ENCODE measurements at regions of chr13 and their contacts with region 1.

Region 1: GRCh38 chr13:29508130-29508875 is 87.2 kb downstream of the SLC7A1 start:
- DNase-seq: peak; percentile 86
- ATAC-seq: peak; percentile 80
- H3K4me3 Mint-ChIP-seq: no peak overlapping the region
- H3K27ac Mint-ChIP-seq: no peak overlapping the region
- H3K4me1 Mint-ChIP-seq: no peaks in the 10 kb centered on the region
- H3K27me3 Mint-ChIP-seq: peaks cover 3% of the 10 kb centered on the region

Region 2: DNA sequence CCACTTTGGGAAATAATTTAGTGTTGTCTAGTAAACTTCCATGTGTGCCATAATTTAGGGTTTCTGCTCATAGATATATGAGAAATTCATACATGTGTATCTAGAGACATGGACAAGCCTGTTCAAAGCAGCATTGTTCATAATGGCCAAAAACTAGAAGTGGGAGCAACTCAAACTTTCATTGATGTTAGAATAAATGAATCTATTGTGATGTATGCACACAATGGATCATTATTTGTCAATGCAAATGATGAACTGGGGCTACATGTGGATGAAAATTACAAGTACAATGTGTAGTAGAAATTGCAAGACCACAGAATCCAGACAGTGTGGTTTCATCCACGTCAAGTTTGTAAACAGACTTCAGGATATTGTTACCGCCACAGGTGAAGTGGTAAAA is 197.5 kb before region 1 on chr13:
- CTCF ChIA-PET with region 1: no interaction called
- POLR2A ChIA-PET with region 1: no interaction called
- intact Hi-C with region 1: no loop called
- DNase-seq: no peak
- ATAC-seq: no peak
- H3K4me3 Mint-ChIP-seq: no peak overlapping the region
- H3K27ac Mint-ChIP-seq: no peak overlapping the region
- H3K4me1 Mint-ChIP-seq: no peaks in the 10 kb centered on the region
- H3K27me3 Mint-ChIP-seq: peaks cover 5% of the 10 kb centered on the region

Region 3: GRCh38 chr13:29496240-29496712 is 12.0 kb before region 1 on chr13:
- CTCF ChIA-PET with region 1: interaction called, 13 read pairs
- POLR2A ChIA-PET with region 1: no interaction called
- intact Hi-C with region 1: no loop called
- DNase-seq: no peak
- ATAC-seq: no peak
- H3K4me3 Mint-ChIP-seq: no peak overlapping the region
- H3K27ac Mint-ChIP-seq: no peak overlapping the region
- H3K4me1 Mint-ChIP-seq: peaks cover 3% of the 10 kb centered on the region
- H3K27me3 Mint-ChIP-seq: peaks cover 19% of the 10 kb centered on the region

Region 4: DNA sequence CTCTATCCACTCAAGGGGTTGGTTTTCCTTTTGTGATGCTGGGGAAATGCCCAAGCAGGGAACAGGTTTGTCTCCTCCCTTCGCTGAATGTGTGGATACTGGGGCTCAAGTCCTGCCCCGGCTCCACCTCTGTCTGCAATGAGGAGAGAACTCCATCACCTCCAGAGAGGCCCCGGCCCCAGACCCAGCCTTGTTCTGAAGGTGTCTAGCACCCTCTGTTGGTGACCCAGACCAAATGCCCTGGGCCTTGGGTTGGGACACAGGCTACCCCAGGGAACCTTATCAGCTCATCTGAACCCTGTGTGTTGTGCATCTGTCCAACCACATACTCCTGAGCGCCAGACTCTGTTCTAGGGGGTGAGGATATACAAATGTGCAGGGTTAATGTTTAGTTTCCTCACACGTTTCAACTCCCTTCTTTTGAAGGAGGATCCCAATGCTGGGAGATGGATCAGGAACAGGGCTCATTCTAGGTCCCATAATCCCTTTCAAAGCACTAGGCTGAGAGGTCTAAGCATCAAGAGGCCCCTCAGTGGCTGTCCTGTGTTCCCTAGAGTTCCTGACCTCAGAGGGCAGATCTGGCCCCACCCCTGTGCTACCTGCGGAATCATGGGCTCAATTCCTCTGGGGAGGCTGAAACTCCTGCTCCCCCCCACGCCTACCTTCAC is 199.7 kb after region 1 on chr13:
- CTCF ChIA-PET with region 1: interaction called, 31 read pairs
- POLR2A ChIA-PET with region 1: no interaction called
- intact Hi-C with region 1: loop called (anchors 1 kb)
- DNase-seq: peak; percentile 73
- ATAC-seq: peak; percentile 94
- H3K4me3 Mint-ChIP-seq: no peak overlapping the region
- H3K27ac Mint-ChIP-seq: no peak overlapping the region
- H3K4me1 Mint-ChIP-seq: no peaks in the 10 kb centered on the region
- H3K27me3 Mint-ChIP-seq: peaks cover 7% of the 10 kb centered on the region

Region 5: GRCh38 chr13:29713839-29714238 is 205.5 kb after region 1 on chr13:
- CTCF ChIA-PET with region 1: interaction called, 31 read pairs
- POLR2A ChIA-PET with region 1: no interaction called
- intact Hi-C with region 1: loop called in 1 of 2 experiments (anchors 2 kb)
- DNase-seq: peak; percentile 21
- ATAC-seq: no peak
- H3K4me3 Mint-ChIP-seq: no peak overlapping the region
- H3K27ac Mint-ChIP-seq: no peak overlapping the region
- H3K4me1 Mint-ChIP-seq: no peaks in the 10 kb centered on the region
- H3K27me3 Mint-ChIP-seq: peaks cover 2% of the 10 kb centered on the region

Measured in activated CD4-positive, alpha-beta T cell treated with anti-CD3 and anti-CD28 coated beads for 36 hours (primary cell).